HepG2 (cell line): ENCODE measurements at regions of chr12 and their contacts with region 1.

Region 1: DNA sequence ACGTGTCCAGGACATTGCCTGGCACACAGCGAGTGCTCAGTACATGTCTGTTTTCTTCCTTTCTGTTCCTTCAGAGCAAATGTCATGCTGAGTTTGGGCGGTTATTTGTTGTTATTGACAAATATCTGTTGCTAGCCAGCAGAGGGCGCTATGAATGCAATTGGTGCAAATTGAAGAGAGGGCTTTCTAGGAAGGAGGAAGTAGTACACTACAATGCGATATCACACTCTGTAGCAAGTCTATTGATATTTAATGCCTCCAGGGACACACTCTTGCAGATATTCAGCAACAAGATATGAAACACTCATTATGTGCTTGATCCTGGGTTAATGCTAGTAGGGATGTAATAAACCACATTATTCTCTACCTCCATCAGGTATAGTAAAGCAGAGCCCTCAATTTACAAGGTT is 267.3 kb upstream of the SRRM4 start:
- DNase-seq: peak; percentile 53
- ATAC-seq: peak; percentile 64
- H3K4me3 ChIP-seq: peak overlapping the region in 1 of 3 experiments; percentile 24; a peak in 1 of 6 replicates
- H3K27ac ChIP-seq: peak overlapping the region; percentile 69
- H3K4me1 ChIP-seq: peaks cover 47% of the 10 kb centered on the region
- H3K27me3 ChIP-seq: no peaks in the 10 kb centered on the region
- CTCF ChIP-seq: peak; percentile 79
- EP300 ChIP-seq: no peak
- POLR2A ChIP-seq: no peak
- RAD21 ChIP-seq: peak; percentile 73

Region 2: DNA sequence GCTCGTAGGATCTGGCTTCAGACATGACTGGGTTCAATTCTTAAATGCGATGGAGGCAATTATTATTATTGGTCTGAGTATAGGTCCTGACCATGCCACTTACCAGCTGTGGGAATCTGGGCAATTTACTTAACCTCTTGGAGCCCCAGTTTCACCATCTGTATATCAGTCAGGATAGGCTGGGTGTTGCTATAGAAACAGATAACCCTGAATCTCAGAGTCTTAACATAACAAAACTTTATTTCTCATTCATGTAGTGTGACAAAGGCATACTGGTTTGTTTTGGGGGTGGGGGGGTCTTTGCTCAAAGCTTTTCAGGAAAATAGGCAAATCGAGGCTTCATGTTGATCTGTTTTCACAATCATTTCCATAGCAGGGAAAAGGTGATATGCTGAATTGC is 67.6 kb after region 1 on chr12:
- CTCF ChIA-PET with region 1: no interaction called
- POLR2A ChIA-PET with region 1: no interaction called
- in situ Hi-C with region 1: no loop called
- intact Hi-C with region 1: loop called (anchors 2 kb)
- DNase-seq: no peak
- ATAC-seq: no peak
- H3K4me3 ChIP-seq: no peak overlapping the region
- H3K27ac ChIP-seq: no peak overlapping the region
- H3K4me1 ChIP-seq: peaks cover 52% of the 10 kb centered on the region
- H3K27me3 ChIP-seq: no peaks in the 10 kb centered on the region
- CTCF ChIP-seq: no peak
- EP300 ChIP-seq: no peak
- POLR2A ChIP-seq: no peak
- RAD21 ChIP-seq: no peak

Region 3: GRCh38 chr12:118840399-118840798 is 126.3 kb after region 1 on chr12:
- CTCF ChIA-PET with region 1: interaction called, 6 read pairs
- POLR2A ChIA-PET with region 1: no interaction called
- in situ Hi-C with region 1: no loop called
- intact Hi-C with region 1: loop called (anchors 2 kb)
- DNase-seq: peak; percentile 29
- ATAC-seq: peak; percentile 80
- H3K4me3 ChIP-seq: no peak overlapping the region
- H3K27ac ChIP-seq: no peak overlapping the region
- H3K4me1 ChIP-seq: no peaks in the 10 kb centered on the region
- H3K27me3 ChIP-seq: no peaks in the 10 kb centered on the region; a peak in 1 of 5 replicates
- CTCF ChIP-seq: peak; percentile 59
- EP300 ChIP-seq: no peak
- POLR2A ChIP-seq: no peak
- RAD21 ChIP-seq: peak; percentile 31; the same call in 1 of the 2 replicates